ENCODE measurements at regions of chr1 and their contacts with region 1.

Region 1: GRCh38 chr1:150281837-150282653 is at the start of gene CIART:
- DNase-seq: peak; percentile 55 to 95 (median 74)
- ATAC-seq: peak; percentile 84
- H3K4me3 ChIP-seq: peak within 1 kb of the TSS; percentile 63
- H3K4me3 Mint-ChIP-seq: peak within 1 kb of the TSS; percentile 82
- H3K27ac ChIP-seq: peak within 1 kb of the TSS; percentile 17 to 49
- H3K27ac Mint-ChIP-seq: peak within 1 kb of the TSS; percentile 87
- H3K4me1 ChIP-seq: peaks cover 24% of the 10 kb centered on the region
- H3K4me1 Mint-ChIP-seq: peaks cover 32% of the 10 kb centered on the region
- H3K27me3 ChIP-seq: no peaks in the 10 kb centered on the region
- H3K27me3 Mint-ChIP-seq: no peaks in the 10 kb centered on the region
- CTCF ChIP-seq: no peak
- total RNA-seq, gene CIART: 4.0 to 4.5 TPM

Region 2: GRCh38 chr1:150021191-150021694 is 260.8 kb before region 1 on chr1:
- CTCF ChIA-PET with region 1: no interaction called
- POLR2A ChIA-PET with region 1: no interaction called
- intact Hi-C with region 1: no loop called
- DNase-seq: no peak
- ATAC-seq: no peak
- H3K4me3 ChIP-seq: no peak overlapping the region
- H3K4me3 Mint-ChIP-seq: no peak overlapping the region
- H3K27ac ChIP-seq: no peak overlapping the region
- H3K27ac Mint-ChIP-seq: no peak overlapping the region
- H3K4me1 ChIP-seq: no peaks in the 10 kb centered on the region
- H3K4me1 Mint-ChIP-seq: no peaks in the 10 kb centered on the region
- H3K27me3 ChIP-seq: no peaks in the 10 kb centered on the region
- H3K27me3 Mint-ChIP-seq: peaks cover 3% of the 10 kb centered on the region
- CTCF ChIP-seq: no peak

Region 3: DNA sequence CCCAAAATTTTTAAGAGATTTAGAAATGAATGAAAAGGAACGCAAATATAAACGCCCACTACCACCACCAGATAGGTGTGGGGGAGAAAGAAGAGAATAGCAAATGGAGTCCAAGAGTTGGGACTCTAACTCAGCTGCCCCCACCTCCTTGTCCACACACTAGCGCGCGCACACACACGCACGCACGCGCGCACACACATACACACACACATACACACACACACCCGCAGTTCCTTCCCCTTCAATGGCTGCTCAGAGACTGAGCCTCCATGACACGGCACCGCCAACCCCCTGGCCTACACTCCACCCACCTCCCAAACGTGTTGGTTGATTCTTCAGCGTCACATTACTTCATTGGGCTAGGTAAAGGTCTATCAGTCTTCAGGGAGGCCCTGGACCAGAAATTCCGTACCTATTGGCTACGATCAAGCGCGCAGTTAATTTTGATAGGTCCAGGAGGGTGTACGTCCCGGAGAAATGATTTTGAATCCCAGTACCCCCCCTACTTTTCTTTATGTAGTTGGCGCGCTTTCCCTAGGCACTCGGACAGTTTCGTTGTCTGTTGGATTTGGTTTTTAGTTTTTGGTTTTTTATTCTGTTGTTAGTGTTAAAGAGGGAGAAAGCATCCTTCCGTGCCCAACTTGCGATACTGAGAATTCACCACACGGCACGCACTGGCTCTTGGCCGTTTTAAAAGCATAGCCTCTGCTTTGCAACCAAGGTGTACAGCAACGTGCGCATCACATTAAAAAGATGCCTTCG is 46.0 kb before region 1 on chr1 and contains the start of gene ANP32E:
- CTCF ChIA-PET with region 1: no interaction called
- POLR2A ChIA-PET with region 1: interaction called, 6 read pairs
- intact Hi-C with region 1: loop called (anchors 5 kb)
- DNase-seq: peak; percentile 89 to 99 (median 91)
- ATAC-seq: peak; percentile 89
- H3K4me3 ChIP-seq: peak within 1 kb of the TSS; percentile 85
- H3K4me3 Mint-ChIP-seq: no peak within 1 kb of the TSS
- H3K27ac ChIP-seq: peak within 1 kb of the TSS; percentile 96 to 99
- H3K27ac Mint-ChIP-seq: no peak within 1 kb of the TSS
- H3K4me1 ChIP-seq: peaks cover 25% of the 10 kb centered on the region
- H3K4me1 Mint-ChIP-seq: peaks cover 16% of the 10 kb centered on the region
- H3K27me3 ChIP-seq: no peaks in the 10 kb centered on the region
- H3K27me3 Mint-ChIP-seq: no peaks in the 10 kb centered on the region
- CTCF ChIP-seq: no peak
- total RNA-seq, gene ANP32E: 31.9 to 32.9 TPM

Region 4: DNA sequence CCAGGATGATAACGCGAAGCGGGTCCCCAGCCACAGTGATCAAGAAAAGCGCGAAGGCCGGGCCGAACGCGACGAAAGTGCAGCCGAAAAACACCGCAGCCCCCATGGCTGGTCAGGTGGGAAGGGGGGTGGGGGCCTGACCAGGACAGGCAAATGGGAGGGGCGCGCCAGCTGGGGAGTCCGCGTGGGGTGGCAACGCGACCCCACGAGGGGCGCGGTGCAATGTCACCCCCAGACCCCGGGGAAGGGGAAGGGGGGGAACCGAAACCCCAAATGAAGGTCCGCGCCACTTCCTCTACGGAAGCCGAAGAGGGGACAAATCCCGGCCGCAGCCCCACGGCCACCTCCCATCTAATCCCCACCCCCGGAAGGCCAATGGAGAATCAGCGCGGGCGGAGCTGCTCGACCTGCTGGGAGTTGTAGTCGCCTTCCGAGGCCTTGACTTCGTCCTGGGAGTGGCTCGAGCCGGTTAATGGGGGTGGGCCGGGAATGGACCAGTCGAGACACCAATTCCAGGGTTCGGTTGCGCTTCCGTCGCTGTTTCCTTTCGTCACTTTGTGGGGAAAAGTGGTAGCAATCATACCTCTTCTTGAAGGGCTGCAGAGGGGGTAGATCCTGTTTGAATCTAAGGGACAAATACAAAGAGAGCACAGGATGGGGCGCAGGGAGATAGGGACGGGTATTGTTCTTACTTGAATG is 13.2 kb before region 1 on chr1 and contains the start of gene APH1A:
- CTCF ChIA-PET with region 1: interaction called, 5 read pairs
- POLR2A ChIA-PET with region 1: interaction called, 45 read pairs
- intact Hi-C with region 1: loop called (anchors 1 to 2 kb)
- DNase-seq: peak; percentile 80 to 96 (median 90)
- ATAC-seq: peak; percentile 89
- H3K4me3 ChIP-seq: peak within 1 kb of the TSS; percentile 95
- H3K4me3 Mint-ChIP-seq: peak within 1 kb of the TSS; percentile 99
- H3K27ac ChIP-seq: peak within 1 kb of the TSS; percentile 91 to 96
- H3K27ac Mint-ChIP-seq: peak within 1 kb of the TSS; percentile 91
- H3K4me1 ChIP-seq: peaks cover 29% of the 10 kb centered on the region
- H3K4me1 Mint-ChIP-seq: peaks cover 38% of the 10 kb centered on the region
- H3K27me3 ChIP-seq: no peaks in the 10 kb centered on the region
- H3K27me3 Mint-ChIP-seq: no peaks in the 10 kb centered on the region
- CTCF ChIP-seq: no peak
- total RNA-seq, gene APH1A: 115 to 122 TPM

Region 5: GRCh38 chr1:150293433-150294168 is 11.6 kb after region 1 on chr1 and contains the start of gene MRPS21:
- CTCF ChIA-PET with region 1: interaction called, 3 read pairs
- POLR2A ChIA-PET with region 1: no interaction called
- intact Hi-C with region 1: loop called in 1 of 2 experiments (anchors 1 kb)
- DNase-seq: peak; percentile 73 to 95 (median 80)
- ATAC-seq: peak; percentile 95
- H3K4me3 ChIP-seq: peak within 1 kb of the TSS; percentile 80
- H3K4me3 Mint-ChIP-seq: peak within 1 kb of the TSS; percentile 92
- H3K27ac ChIP-seq: peak within 1 kb of the TSS; percentile 78 to 95
- H3K27ac Mint-ChIP-seq: peak within 1 kb of the TSS; percentile 96
- H3K4me1 ChIP-seq: peaks cover 19% of the 10 kb centered on the region
- H3K4me1 Mint-ChIP-seq: peaks cover 23% of the 10 kb centered on the region
- H3K27me3 ChIP-seq: no peaks in the 10 kb centered on the region
- H3K27me3 Mint-ChIP-seq: no peaks in the 10 kb centered on the region
- CTCF ChIP-seq: no peak
- total RNA-seq, gene MRPS21: 48.5 to 52.0 TPM

Region 6: DNA sequence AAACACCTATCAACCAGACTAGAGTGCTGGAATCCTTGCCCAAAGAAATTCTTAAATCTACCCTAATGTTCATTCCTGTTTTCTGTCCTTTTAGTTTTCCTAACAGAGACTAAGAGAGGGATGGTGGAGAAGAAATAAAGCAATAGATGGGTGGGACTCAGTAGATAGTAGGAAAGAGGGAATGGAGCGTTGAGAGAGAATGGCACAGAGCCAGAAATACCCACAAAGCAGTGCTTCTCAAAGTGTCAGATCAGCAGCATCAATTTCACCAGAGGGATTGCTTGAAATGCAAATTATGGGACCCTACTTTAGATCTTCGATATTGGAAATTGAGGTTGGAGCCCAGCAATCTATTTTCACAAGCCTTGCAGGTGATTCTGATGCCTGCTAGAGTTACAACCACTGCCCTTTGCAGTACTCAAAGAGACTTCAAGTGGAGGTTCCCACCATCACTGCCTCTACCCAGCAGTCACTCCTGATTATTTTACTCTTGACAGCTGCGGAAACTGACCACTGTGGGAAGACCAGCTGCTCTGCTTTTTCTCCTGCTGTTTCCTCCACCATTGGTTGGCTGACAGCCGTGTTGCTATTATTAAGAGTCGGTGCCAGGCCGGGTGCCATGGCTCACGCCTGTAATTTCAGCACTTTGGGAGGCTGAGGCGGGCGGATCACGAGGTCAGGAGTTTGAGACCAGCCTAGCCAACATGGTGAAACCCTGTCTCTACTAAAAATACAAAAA is 27.9 kb after region 1 on chr1:
- CTCF ChIA-PET with region 1: no interaction called
- POLR2A ChIA-PET with region 1: no interaction called
- intact Hi-C with region 1: no loop called
- DNase-seq: no peak
- ATAC-seq: no peak
- H3K4me3 ChIP-seq: no peak overlapping the region
- H3K4me3 Mint-ChIP-seq: no peak overlapping the region
- H3K27ac ChIP-seq: no peak overlapping the region
- H3K27ac Mint-ChIP-seq: no peak overlapping the region
- H3K4me1 ChIP-seq: no peaks in the 10 kb centered on the region
- H3K4me1 Mint-ChIP-seq: no peaks in the 10 kb centered on the region
- H3K27me3 ChIP-seq: no peaks in the 10 kb centered on the region
- H3K27me3 Mint-ChIP-seq: no peaks in the 10 kb centered on the region
- CTCF ChIP-seq: no peak

Region 7: GRCh38 chr1:150876119-150876454 is 594.0 kb after region 1 on chr1:
- CTCF ChIA-PET with region 1: no interaction called
- POLR2A ChIA-PET with region 1: no interaction called
- intact Hi-C with region 1: loop called in 1 of 2 experiments (anchors 10 kb)
- DNase-seq: no peak
- ATAC-seq: no peak
- H3K4me3 ChIP-seq: peak overlapping the region; percentile 79
- H3K4me3 Mint-ChIP-seq: peak overlapping the region; percentile 98
- H3K27ac ChIP-seq: peak overlapping the region; percentile 68 to 86
- H3K27ac Mint-ChIP-seq: peak overlapping the region; percentile 92
- H3K4me1 ChIP-seq: peaks cover 15% of the 10 kb centered on the region
- H3K4me1 Mint-ChIP-seq: peaks cover 43% of the 10 kb centered on the region
- H3K27me3 ChIP-seq: no peaks in the 10 kb centered on the region
- H3K27me3 Mint-ChIP-seq: no peaks in the 10 kb centered on the region
- CTCF ChIP-seq: no peak